T-cell (primary cell): ENCODE measurements at regions of chr6 and their contacts with region 1.

Region 1: GRCh38 chr6:17621003-17621402 is 20.9 kb downstream of the FAM8A1 start:
- DNase-seq: no peak
- ATAC-seq: no peak
- H3K4me3 ChIP-seq: no peak overlapping the region
- H3K4me3 Mint-ChIP-seq: no peak overlapping the region
- H3K27ac ChIP-seq: no peak overlapping the region
- H3K27ac Mint-ChIP-seq: peak overlapping the region; percentile 5 to 56
- H3K4me1 ChIP-seq: peaks cover 0 to 2% of the 10 kb centered on the region in 2 experiments
- H3K4me1 Mint-ChIP-seq: peaks cover 12 to 24% (median 16%) of the 10 kb centered on the region in 3 donors
- H3K27me3 ChIP-seq: no peaks in the 10 kb centered on the region
- H3K27me3 Mint-ChIP-seq: no peaks in the 10 kb centered on the region

Region 2: GRCh38 chr6:17633465-17634188 is 12.6 kb after region 1 on chr6:
- CTCF ChIA-PET with region 1: no interaction called
- POLR2A ChIA-PET with region 1: no interaction called
- DNase-seq: peak in 8 of 35 experiments; percentile 0 to 59 (median 6)
- ATAC-seq: peak; percentile 44 to 77 (median 68)
- H3K4me3 ChIP-seq: peak overlapping the region in 1 of 2 donors; percentile 3
- H3K4me3 Mint-ChIP-seq: peak overlapping the region in 2 of 3 donors; percentile 4 to 17
- H3K27ac ChIP-seq: peak overlapping the region; percentile 48
- H3K27ac Mint-ChIP-seq: peak overlapping the region; percentile 83 to 87
- H3K4me1 ChIP-seq: peaks cover 13 to 27% of the 10 kb centered on the region in 2 experiments
- H3K4me1 Mint-ChIP-seq: peaks cover 60 to 61% (median 61%) of the 10 kb centered on the region in 3 donors
- H3K27me3 ChIP-seq: no peaks in the 10 kb centered on the region
- H3K27me3 Mint-ChIP-seq: no peaks in the 10 kb centered on the region

Region 3: GRCh38 chr6:17683428-17683827 is 62.4 kb after region 1 on chr6:
- CTCF ChIA-PET with region 1: interaction called in 1 of 2 experiments, 10 read pairs
- POLR2A ChIA-PET with region 1: no interaction called
- DNase-seq: no peak
- ATAC-seq: no peak
- H3K4me3 ChIP-seq: no peak overlapping the region
- H3K4me3 Mint-ChIP-seq: no peak overlapping the region
- H3K27ac ChIP-seq: no peak overlapping the region
- H3K27ac Mint-ChIP-seq: no peak overlapping the region
- H3K4me1 ChIP-seq: peaks cover 0 to 7% of the 10 kb centered on the region in 2 experiments
- H3K4me1 Mint-ChIP-seq: peaks cover 62 to 69% (median 68%) of the 10 kb centered on the region in 3 donors
- H3K27me3 ChIP-seq: no peaks in the 10 kb centered on the region
- H3K27me3 Mint-ChIP-seq: no peaks in the 10 kb centered on the region

Region 4: GRCh38 chr6:17706580-17707370 is 85.8 kb after region 1 on chr6 and contains the start of gene NUP153:
- CTCF ChIA-PET with region 1: interaction called, 3 to 13 read pairs
- POLR2A ChIA-PET with region 1: no interaction called
- DNase-seq: peak; percentile 96 to 100 (median 99)
- ATAC-seq: peak; percentile 82 to 90 (median 86)
- H3K4me3 ChIP-seq: peak within 1 kb of the TSS; percentile 79 to 87
- H3K4me3 Mint-ChIP-seq: peak within 1 kb of the TSS; percentile 82 to 92 (median 86)
- H3K27ac ChIP-seq: peak within 1 kb of the TSS; percentile 98
- H3K27ac Mint-ChIP-seq: peak within 1 kb of the TSS; percentile 99
- H3K4me1 ChIP-seq: peaks cover 29 to 35% of the 10 kb centered on the region in 2 experiments
- H3K4me1 Mint-ChIP-seq: peaks cover 35 to 44% (median 42%) of the 10 kb centered on the region in 3 donors
- H3K27me3 ChIP-seq: no peaks in the 10 kb centered on the region
- H3K27me3 Mint-ChIP-seq: no peaks in the 10 kb centered on the region
- total RNA-seq, gene NUP153: 46.4 to 58.5 (median 54.2) TPM